Left ventricle myocardium inferior (tissue), 1 donor: ENCODE measurements at regions of chr6 and their contacts with region 1.

Region 1: DNA sequence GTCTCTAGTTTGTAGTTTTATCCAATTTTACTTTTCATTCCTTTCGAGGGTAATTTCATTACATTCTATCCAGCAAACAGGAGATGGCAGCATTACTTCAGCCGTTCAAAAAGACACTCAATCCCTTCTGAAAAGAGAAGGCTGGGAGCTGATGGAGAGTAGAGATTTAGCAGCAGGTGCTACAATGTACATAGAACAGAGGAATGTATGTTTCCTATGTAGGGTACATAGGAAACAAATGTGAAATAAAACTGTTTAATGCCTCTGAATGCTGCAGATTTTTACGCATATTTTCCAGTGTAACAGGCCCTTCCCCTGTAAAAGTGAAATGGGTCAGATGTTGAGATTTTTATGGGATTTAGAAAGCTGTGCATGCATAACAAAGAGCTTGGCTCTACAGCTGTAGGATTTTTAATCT is 16.0 kb downstream of the RPS12 start:
- DNase-seq: no peak
- H3K4me3 ChIP-seq: no peak overlapping the region
- H3K27ac ChIP-seq: no peak overlapping the region
- H3K4me1 ChIP-seq: no peaks in the 10 kb centered on the region
- H3K27me3 ChIP-seq: no peaks in the 10 kb centered on the region
- CTCF ChIP-seq: peak; percentile 58

Region 2: DNA sequence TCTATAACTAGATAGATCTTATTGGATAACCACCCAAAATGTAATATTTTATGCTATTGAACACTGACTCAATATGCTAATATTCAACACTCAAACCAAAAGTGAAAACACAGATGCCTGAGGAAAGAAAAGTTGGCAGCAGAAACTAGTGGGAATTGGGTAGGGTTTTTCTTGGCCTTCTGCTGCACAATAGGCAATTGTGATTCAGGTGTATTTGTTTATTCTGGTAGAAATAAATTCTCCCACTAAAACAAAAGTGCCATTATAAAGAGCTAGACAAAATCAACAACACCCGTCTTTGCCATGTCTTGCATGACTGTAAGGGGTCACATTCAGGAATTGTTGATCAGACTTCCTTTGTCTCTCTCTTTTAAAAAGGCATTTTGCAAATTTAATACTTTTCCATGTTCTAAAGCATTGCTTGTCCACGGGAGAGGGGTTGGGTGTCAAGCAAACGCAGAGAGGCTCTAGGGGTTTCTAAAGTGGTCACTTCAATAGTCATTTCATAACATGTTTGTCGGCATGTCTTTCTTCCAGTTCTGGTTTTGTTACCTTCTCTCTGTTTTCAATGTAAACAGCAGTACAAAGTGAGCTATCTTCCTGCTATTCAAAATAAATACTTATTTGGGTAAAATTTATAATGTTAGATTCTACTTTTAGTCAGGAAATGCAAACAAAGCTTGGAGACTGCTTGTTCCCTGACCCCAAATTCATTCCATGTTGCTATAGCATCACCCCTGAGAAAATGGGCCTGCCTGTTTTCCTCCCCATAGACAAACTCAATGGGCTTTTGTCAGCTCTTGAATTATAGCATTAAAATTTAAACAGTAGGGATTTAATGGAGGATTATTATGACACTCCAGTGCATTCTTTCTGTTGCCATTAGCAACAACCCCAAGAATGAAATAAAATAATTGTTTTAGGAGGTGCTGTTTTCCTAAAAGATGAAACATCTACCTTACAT is 662.1 kb before region 1 on chr6:
- intact Hi-C with region 1: no loop called
- DNase-seq: no peak
- H3K4me3 ChIP-seq: no peak overlapping the region
- H3K27ac ChIP-seq: peak overlapping the region; percentile 21
- H3K4me1 ChIP-seq: peaks cover 5% of the 10 kb centered on the region
- H3K27me3 ChIP-seq: no peaks in the 10 kb centered on the region
- CTCF ChIP-seq: no peak

Region 3: GRCh38 chr6:133159255-133159795 is 329.0 kb after region 1 on chr6:
- intact Hi-C with region 1: no loop called
- DNase-seq: no peak
- H3K4me3 ChIP-seq: no peak overlapping the region
- H3K27ac ChIP-seq: no peak overlapping the region
- H3K4me1 ChIP-seq: no peaks in the 10 kb centered on the region
- H3K27me3 ChIP-seq: no peaks in the 10 kb centered on the region
- CTCF ChIP-seq: no peak

Region 4: GRCh38 chr6:133202610-133203343 is 372.4 kb after region 1 on chr6:
- intact Hi-C with region 1: no loop called
- DNase-seq: no peak
- H3K4me3 ChIP-seq: no peak overlapping the region
- H3K27ac ChIP-seq: no peak overlapping the region
- H3K4me1 ChIP-seq: peaks cover 10% of the 10 kb centered on the region
- H3K27me3 ChIP-seq: no peaks in the 10 kb centered on the region
- CTCF ChIP-seq: no peak

Region 5: DNA sequence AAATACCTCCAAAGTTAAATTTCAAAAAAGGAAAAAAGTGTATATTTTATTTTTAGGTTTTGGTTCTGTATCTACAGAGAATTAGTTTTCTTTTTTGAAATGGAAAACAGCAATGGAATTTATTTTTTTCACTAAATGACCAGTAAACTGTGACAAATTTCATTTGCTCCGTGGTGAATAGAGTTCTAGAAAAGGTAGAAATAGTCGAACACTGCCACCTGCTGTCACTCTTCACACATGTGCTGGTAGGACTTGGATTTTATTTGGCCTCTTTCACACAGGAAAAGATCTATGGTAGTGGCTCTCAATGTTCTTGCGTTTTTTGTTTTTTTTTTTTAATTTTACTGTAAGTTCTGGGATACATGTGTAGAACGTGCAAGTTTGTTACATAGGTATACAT is 723.3 kb after region 1 on chr6:
- intact Hi-C with region 1: loop called (anchors 5 kb)
- DNase-seq: no peak
- H3K4me3 ChIP-seq: no peak overlapping the region
- H3K27ac ChIP-seq: no peak overlapping the region
- H3K4me1 ChIP-seq: peaks cover 22% of the 10 kb centered on the region
- H3K27me3 ChIP-seq: no peaks in the 10 kb centered on the region
- CTCF ChIP-seq: peak; percentile 68